GM12878 (cell line): ENCODE measurements at regions of chr3 and their contacts with region 1.

Region 1: DNA sequence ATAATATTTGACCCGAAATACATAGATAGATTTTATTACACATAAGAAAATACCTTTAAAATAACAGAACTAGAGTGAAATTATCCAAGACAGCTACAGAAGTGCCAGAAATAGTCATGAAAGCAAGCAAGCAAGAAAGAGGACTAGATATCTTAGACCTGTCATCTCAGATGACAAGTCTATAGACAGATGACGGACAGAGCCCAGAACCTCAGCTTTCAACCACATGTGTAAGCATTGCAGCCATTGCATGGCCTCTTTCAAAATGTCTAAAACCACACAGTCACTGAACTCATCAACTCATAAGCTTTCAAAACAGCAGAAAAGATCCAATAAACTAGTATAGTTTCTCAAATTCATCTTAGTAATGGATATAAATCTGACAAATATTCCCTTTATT is 59.8 kb upstream of the FHIT start:
- DNase-seq: no peak
- ATAC-seq: no peak
- H3K4me3 ChIP-seq: no peak overlapping the region
- H3K27ac ChIP-seq: no peak overlapping the region
- H3K4me1 ChIP-seq: no peaks in the 10 kb centered on the region
- H3K27me3 ChIP-seq: no peaks in the 10 kb centered on the region; a peak in 2 of 4 replicates
- CTCF ChIP-seq: no peak
- EP300 ChIP-seq: no peak
- POLR2A ChIP-seq: no peak
- RAD21 ChIP-seq: no peak

Region 2: DNA sequence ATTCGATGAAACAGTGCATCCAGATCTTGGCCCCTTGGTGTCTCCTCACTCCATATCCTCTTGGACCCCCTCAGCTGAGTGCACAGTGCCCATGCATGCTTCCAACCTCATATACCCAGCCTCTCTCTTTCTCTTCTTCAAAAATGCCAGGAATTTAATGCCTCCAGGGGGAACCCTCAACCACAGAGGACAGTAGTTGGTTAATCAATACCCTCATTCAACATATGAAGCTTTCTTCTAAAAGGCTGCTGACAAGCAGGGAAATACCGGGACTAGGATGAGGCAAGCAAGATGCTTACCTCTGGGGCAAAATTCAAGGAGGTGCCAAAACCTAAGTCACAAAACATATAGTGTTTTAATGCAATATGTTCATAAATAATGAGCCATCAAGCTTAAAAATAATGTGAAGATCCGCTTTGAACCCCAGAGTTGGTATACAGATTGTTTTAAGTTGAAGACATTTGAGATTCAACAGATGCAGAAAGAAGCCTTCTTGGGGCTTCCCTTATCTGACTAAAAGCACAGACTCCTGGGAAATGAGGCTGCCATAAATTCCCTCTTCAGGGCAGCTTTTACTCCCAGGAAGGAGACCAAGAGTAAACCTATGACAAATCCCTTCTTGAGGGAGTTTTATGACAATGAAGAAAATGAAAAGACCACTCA is 11.6 kb before region 1 on chr3:
- CTCF ChIA-PET with region 1: interaction called, 9 read pairs
- POLR2A ChIA-PET with region 1: no interaction called
- RAD21 ChIA-PET with region 1: no interaction called
- SMC1A ChIA-PET with region 1: interaction called, 14 read pairs
- in situ Hi-C with region 1: no loop called
- intact Hi-C with region 1: no loop called
- DNase-seq: no peak
- ATAC-seq: no peak
- H3K4me3 ChIP-seq: no peak overlapping the region
- H3K27ac ChIP-seq: no peak overlapping the region
- H3K4me1 ChIP-seq: no peaks in the 10 kb centered on the region
- H3K27me3 ChIP-seq: no peaks in the 10 kb centered on the region
- CTCF ChIP-seq: no peak
- EP300 ChIP-seq: no peak
- POLR2A ChIP-seq: no peak
- RAD21 ChIP-seq: no peak